ENCODE measurements at regions of chr9 and their contacts with region 1.

Region 1: DNA sequence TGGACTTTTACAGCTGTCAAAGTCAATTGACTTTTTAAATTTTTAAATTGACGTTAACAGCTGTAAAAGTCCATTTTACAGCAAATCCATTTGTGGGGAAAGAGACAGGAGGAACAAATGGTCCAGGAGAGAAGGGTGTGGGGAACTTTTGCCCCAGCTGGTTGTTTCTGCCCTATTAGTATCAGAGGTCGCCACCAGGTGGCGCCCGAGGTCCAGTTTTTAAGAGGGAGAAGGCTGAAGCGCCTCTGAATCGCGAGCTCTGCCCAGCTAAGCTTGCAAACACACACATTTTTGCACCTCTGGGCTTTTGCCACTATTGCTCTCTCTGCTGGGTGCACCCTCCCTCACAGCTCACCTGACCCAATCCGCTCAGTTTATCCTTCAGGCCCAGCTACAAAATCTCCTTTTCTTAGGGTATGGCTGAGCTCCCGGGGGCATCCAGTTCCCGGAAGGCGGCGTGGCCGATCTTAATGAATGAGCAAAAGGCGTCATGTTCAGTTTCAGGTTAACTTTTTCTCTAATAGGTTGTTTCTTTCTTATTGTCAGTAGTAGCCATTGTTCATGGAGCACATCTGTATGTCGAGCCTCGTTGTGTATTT is 6.3 kb upstream of the TTLL11 start:
- DNase-seq: peak; percentile 89
- ATAC-seq: peak; percentile 88
- H3K4me3 Mint-ChIP-seq: peak overlapping the region; percentile 52
- H3K27ac Mint-ChIP-seq: no peak overlapping the region
- H3K4me1 Mint-ChIP-seq: peaks cover 10% of the 10 kb centered on the region
- H3K27me3 Mint-ChIP-seq: peaks cover 14% of the 10 kb centered on the region

Region 2: GRCh38 chr9:122087406-122088200 is 11.8 kb before region 1 on chr9:
- CTCF ChIA-PET with region 1: interaction called, 17 read pairs
- POLR2A ChIA-PET with region 1: no interaction called
- intact Hi-C with region 1: no loop called
- DNase-seq: no peak
- ATAC-seq: no peak
- H3K4me3 Mint-ChIP-seq: no peak overlapping the region
- H3K27ac Mint-ChIP-seq: no peak overlapping the region
- H3K4me1 Mint-ChIP-seq: peaks cover 26% of the 10 kb centered on the region
- H3K27me3 Mint-ChIP-seq: no peaks in the 10 kb centered on the region

Region 3: DNA sequence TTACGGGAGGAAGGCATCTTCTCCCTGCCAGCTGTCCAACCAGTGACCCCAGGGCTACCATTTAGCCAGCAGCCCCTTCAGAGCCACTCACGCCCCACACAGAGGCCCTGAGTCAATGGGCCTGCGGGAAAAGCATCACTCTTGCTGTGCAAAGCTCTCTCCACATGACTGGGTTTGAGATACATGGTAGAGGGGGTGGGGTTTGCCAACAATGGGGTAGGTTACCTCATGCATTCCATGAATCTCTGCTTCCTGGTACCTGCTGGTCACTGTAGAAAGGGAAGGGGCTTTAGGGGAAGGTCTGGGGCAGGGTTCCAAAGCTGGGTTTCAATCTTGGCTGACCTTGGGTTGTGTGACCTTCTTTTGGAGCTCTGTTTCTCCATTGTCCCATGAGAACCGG is 16.7 kb after region 1 on chr9:
- CTCF ChIA-PET with region 1: interaction called, 208 read pairs
- POLR2A ChIA-PET with region 1: no interaction called
- intact Hi-C with region 1: no loop called
- DNase-seq: no peak
- ATAC-seq: no peak
- H3K4me3 Mint-ChIP-seq: no peak overlapping the region
- H3K27ac Mint-ChIP-seq: no peak overlapping the region
- H3K4me1 Mint-ChIP-seq: no peaks in the 10 kb centered on the region
- H3K27me3 Mint-ChIP-seq: peaks cover 2% of the 10 kb centered on the region

Region 4: GRCh38 chr9:122159026-122159924 is 59.9 kb after region 1 on chr9 and contains the starts of genes MORN5 and NDUFA8:
- CTCF ChIA-PET with region 1: interaction called, 10 read pairs
- POLR2A ChIA-PET with region 1: no interaction called
- intact Hi-C with region 1: no loop called
- DNase-seq: peak; percentile 98
- ATAC-seq: peak; percentile 97
- H3K4me3 Mint-ChIP-seq: peak within 1 kb of the TSS; percentile 95
- H3K27ac Mint-ChIP-seq: peak within 1 kb of the TSS; percentile 96
- H3K4me1 Mint-ChIP-seq: peaks cover 33% of the 10 kb centered on the region
- H3K27me3 Mint-ChIP-seq: peaks cover 13% of the 10 kb centered on the region
- total RNA-seq, gene MORN5: not detected
- total RNA-seq, gene NDUFA8: 50.4 to 57.2 TPM

Region 5: DNA sequence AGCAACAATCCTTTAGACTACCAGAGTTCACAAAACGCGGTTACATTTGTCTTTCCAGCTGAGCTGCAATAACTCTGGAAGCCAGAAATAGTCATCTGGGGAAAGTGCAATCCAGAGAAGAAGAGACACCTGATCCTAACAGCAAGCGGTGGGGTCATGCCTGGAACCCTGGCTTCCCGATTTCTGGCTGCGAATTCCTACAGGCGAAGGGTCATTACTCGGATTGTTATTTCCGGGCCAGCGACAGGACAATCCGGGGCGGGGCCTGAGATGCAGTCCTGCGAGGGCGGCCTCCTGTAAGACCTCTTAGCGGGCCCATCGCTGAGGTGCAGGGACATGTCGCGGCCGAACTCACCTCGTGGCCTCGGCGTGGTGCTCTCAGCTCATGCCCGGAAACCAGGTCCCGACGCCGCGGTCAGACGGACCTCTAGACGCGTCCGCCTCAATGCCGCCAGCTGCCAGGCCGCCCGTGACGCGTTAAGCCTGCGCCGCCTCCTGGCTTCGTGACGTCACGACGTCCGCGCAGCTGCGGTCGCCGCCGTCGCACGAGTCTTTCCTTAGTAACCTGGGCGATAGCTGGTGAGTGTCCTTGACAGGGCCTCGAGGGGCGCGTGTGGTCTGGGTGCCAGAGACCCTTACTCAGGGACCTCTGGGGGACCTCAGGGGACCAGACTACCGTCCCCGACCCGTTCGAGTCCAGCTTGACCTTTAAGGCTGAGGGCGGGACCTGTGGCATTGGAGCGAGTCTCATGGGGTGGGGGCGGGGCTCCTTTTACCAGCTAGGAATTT is 165.2 kb after region 1 on chr9 and contains the starts of genes MRRF and RBM18:
- CTCF ChIA-PET with region 1: interaction called, 11 read pairs
- POLR2A ChIA-PET with region 1: interaction called, 3 read pairs
- intact Hi-C with region 1: no loop called
- DNase-seq: peak; percentile 93
- ATAC-seq: peak; percentile 83
- H3K4me3 Mint-ChIP-seq: peak within 1 kb of the TSS; percentile 98
- H3K27ac Mint-ChIP-seq: peak within 1 kb of the TSS; percentile 99
- H3K4me1 Mint-ChIP-seq: peaks cover 44% of the 10 kb centered on the region
- H3K27me3 Mint-ChIP-seq: no peaks in the 10 kb centered on the region
- total RNA-seq, gene MRRF: 57.3 to 61.5 TPM
- total RNA-seq, gene RBM18: 22.3 to 28.6 TPM

Region 6: GRCh38 chr9:122350638-122351355 is 251.4 kb after region 1 on chr9:
- CTCF ChIA-PET with region 1: interaction called, 146 read pairs
- POLR2A ChIA-PET with region 1: no interaction called
- intact Hi-C with region 1: loop called (anchors 1 kb)
- DNase-seq: peak; percentile 89
- ATAC-seq: peak; percentile 90
- H3K4me3 Mint-ChIP-seq: no peak overlapping the region
- H3K27ac Mint-ChIP-seq: no peak overlapping the region
- H3K4me1 Mint-ChIP-seq: peaks cover 7% of the 10 kb centered on the region
- H3K27me3 Mint-ChIP-seq: peaks cover 26% of the 10 kb centered on the region

Region 7: DNA sequence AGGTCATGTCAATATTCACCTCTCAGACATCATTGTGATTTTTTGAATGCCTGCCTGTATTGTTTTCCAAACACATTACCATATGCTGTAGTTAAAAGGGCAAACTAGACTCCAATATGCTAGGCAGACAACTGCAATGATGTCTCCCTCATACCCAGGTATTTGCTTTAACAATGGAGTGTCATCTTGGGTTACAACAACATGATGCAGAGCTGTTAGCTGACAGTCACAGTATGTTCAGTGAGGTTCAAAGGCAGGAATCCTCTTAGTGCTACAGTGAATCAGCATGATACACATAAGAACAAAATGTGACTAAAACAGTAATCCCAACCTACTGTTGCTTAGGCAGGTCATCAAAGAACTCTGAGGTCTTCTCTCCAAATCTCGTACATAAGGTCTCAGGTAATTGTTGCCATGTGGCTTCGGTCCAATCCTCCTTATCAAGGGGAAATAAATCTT is 354.3 kb after region 1 on chr9:
- CTCF ChIA-PET with region 1: no interaction called
- POLR2A ChIA-PET with region 1: no interaction called
- intact Hi-C with region 1: loop called in 1 of 2 experiments (anchors 2 kb)
- DNase-seq: no peak
- ATAC-seq: no peak
- H3K4me3 Mint-ChIP-seq: no peak overlapping the region
- H3K27ac Mint-ChIP-seq: no peak overlapping the region
- H3K4me1 Mint-ChIP-seq: no peaks in the 10 kb centered on the region
- H3K27me3 Mint-ChIP-seq: peaks cover 11% of the 10 kb centered on the region